ENCODE measurements at regions of chr6 and their contacts with region 1.

Region 1: DNA sequence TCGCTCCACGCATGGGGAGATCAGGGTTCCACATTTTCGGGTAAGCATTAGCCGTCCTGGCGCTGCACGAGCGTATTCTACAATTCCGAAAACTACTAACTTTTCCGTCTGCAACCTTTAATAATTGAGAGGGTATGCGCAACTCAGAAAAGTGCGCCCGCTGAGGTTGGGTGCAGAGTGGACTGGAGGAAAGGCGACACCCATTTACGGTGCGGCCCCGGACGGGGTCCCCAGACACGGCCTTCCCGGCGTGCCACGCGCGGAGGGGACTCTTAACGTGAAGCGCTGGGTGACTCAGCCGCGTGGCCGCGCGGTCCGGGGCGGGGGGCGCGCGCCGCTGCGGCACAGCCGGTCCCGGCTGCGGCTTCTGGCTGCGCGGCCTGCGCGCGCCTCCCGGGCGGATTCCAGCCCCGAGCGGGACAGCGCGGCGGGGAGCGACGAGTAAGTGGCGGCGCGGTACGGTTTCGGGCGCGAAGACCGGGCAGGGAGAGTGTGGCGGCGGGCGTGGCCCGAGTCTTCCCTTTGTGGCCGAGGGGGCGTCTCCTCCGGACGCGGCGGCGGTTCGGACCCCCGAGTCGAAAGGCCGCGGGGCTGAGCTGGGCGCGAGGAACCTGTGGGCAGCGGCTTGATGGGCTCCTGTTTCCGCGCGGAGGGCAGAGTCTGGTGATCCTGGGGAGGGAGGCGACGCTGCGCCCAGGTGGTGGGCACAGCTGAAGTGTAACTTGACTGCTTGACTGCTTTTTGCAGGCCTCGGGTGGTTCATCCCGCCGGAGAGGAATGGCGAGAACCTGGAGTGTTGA is at the starts of genes KCTD20 and PXT1:
- DNase-seq: peak; percentile 94 to 95
- ATAC-seq: peak; percentile 96
- H3K4me3 ChIP-seq: peak within 1 kb of the TSS; percentile 65 to 96
- H3K27ac ChIP-seq: peak within 1 kb of the TSS; percentile 28 to 87
- H3K4me1 ChIP-seq: peaks cover 0 to 2% of the 10 kb centered on the region in 2 donors
- H3K27me3 ChIP-seq: no peaks in the 10 kb centered on the region
- total RNA-seq, gene KCTD20: 58.7 to 70.6 TPM
- total RNA-seq, gene PXT1: not detected

Region 2: GRCh38 chr6:36386495-36387439 is 56.1 kb before region 1 on chr6:
- intact Hi-C with region 1: loop called in 1 of 2 experiments (anchors 5 kb)
- DNase-seq: peak; percentile 59 to 77
- ATAC-seq: peak; percentile 47
- H3K4me3 ChIP-seq: peak overlapping the region; percentile 58 to 86
- H3K27ac ChIP-seq: peak overlapping the region; percentile 20 to 35
- H3K4me1 ChIP-seq: no peaks in the 10 kb centered on the region
- H3K27me3 ChIP-seq: no peaks in the 10 kb centered on the region

Region 3: GRCh38 chr6:36423101-36423824 is 19.6 kb before region 1 on chr6:
- intact Hi-C with region 1: loop called in 1 of 2 experiments (anchors 2 kb)
- DNase-seq: peak; percentile 99 to 100
- ATAC-seq: peak; percentile 99
- H3K4me3 ChIP-seq: peak overlapping the region; percentile 36 to 69
- H3K27ac ChIP-seq: peak overlapping the region; percentile 43 to 46
- H3K4me1 ChIP-seq: no peaks in the 10 kb centered on the region
- H3K27me3 ChIP-seq: no peaks in the 10 kb centered on the region

Region 4: GRCh38 chr6:36546920-36547645 is 104.2 kb after region 1 on chr6 and contains the start of gene STK38:
- intact Hi-C with region 1: loop called in 1 of 2 experiments (anchors 5 kb)
- DNase-seq: peak; percentile 95 to 98
- ATAC-seq: peak; percentile 97
- H3K4me3 ChIP-seq: peak within 1 kb of the TSS; percentile 55 to 86
- H3K27ac ChIP-seq: peak within 1 kb of the TSS; percentile 68 to 94
- H3K4me1 ChIP-seq: peaks cover 0 to 7% of the 10 kb centered on the region in 2 donors
- H3K27me3 ChIP-seq: no peaks in the 10 kb centered on the region
- total RNA-seq, gene STK38: 25.2 to 38.0 TPM

Region 5: DNA sequence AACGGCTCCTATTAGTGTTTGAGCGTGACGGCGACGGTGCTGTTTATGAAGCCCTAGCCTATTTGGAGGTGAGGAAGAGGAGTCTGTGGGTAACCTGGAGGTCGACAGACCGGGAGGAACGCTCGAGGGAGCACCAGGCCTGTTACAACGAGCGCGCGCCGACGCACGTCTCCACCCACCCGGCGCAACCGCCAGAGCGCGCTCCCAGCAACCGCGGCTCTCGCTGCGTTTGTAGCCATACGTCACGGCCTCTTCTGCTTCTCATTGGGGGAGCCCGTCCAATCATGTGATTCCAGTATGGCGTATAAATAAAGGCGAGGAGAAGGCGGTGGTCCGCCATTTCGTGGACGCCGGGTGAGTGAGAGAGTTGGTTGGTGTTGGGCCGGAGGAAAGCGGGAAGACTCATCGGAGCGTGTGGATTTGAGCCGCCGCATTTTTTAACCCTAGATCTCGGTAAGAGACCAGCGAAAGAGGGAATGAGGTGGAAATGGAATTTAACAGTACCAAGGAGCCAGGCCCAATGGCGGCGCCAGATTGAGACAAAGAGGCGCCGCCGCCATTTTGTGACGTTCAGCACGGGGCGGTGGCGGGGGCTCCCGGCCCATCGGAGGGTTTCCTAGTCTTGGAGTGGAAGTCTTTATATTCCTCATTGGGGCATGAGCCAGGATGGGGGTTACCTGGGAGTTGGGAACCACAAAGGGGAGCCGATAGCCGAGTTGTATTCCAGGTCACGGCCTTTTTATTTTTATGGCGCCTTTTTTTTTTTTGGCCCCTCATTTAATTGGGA is 151.4 kb after region 1 on chr6 and contains the start of gene SRSF3:
- intact Hi-C with region 1: loop called in 1 of 2 experiments (anchors 5 kb)
- DNase-seq: peak; percentile 98 to 99
- ATAC-seq: peak; percentile 99
- H3K4me3 ChIP-seq: peak within 1 kb of the TSS; percentile 88 to 98
- H3K27ac ChIP-seq: peak within 1 kb of the TSS; percentile 73 to 93
- H3K4me1 ChIP-seq: peaks cover 4 to 9% of the 10 kb centered on the region in 2 donors
- H3K27me3 ChIP-seq: no peaks in the 10 kb centered on the region
- total RNA-seq, gene SRSF3: 190 to 197 TPM